GM10248 (cell line): ENCODE measurements at regions of chr17 and their contacts with region 1.

Region 1: GRCh38 chr17:42980398-42981397 is at the start of gene RUNDC1:
- DNase-seq: peak; percentile 95
- CTCF ChIP-seq: peak; percentile 32

Region 2: GRCh38 chr17:42906772-42907446 is 73.8 kb before region 1 on chr17:
- CTCF ChIA-PET with region 1: no interaction called
- POLR2A ChIA-PET with region 1: no interaction called
- DNase-seq: no peak
- CTCF ChIP-seq: no peak

Region 3: GRCh38 chr17:42969001-42969581 is 11.6 kb before region 1 on chr17:
- CTCF ChIA-PET with region 1: interaction called, 12 read pairs
- POLR2A ChIA-PET with region 1: interaction called, 3 read pairs
- DNase-seq: no peak
- CTCF ChIP-seq: no peak